ENCODE measurements at regions of chr10 and their contacts with region 1.

Region 1: DNA sequence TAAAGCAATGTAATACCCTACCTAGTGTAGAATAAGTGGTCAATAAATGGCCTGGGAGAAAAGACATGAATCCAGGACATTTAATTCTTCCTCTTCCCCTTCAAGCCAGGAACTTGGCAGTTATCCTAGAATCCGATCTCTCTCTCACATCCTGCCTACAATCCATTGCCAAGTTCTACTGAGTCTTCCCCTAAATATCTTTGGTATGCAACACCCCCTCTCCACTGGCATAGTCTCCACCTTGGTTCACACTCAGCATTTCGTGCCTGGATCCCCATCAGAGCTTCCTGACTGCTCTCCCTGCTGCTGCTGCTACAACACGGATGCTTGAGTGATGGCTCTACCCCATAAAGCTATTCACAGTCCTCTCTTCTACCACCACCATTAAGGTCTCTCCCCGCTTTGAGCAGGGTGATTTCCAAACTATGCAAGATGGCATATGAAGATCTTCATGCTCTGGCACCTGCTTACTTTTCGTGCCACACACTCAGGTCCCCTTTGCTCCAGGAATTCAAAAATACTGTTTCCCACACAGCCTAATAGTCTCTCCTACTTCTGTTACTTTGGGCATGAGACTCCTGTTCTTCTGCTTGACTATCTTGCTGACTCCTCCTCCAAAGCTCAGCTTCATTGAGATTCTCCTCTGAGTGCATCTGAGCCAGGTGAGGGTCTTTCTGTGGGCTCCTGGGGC is 4.8 kb downstream of the ANK3 start:
- DNase-seq: peak; percentile 77 to 95
- H3K4me3 ChIP-seq: no peak overlapping the region
- H3K27ac ChIP-seq: peak overlapping the region; percentile 55
- H3K4me1 ChIP-seq: peaks cover 41% of the 10 kb centered on the region
- H3K27me3 ChIP-seq: no peaks in the 10 kb centered on the region
- CTCF ChIP-seq: no peak

Region 2: GRCh38 chr10:60282771-60283353 is 102.0 kb before region 1 on chr10:
- CTCF ChIA-PET with region 1: no interaction called
- POLR2A ChIA-PET with region 1: no interaction called
- intact Hi-C with region 1: loop called (anchors 2 kb)
- DNase-seq: peak; percentile 32 to 96
- H3K4me3 ChIP-seq: no peak overlapping the region
- H3K27ac ChIP-seq: peak overlapping the region; percentile 52
- H3K4me1 ChIP-seq: peaks cover 24% of the 10 kb centered on the region
- H3K27me3 ChIP-seq: no peaks in the 10 kb centered on the region
- CTCF ChIP-seq: no peak

Region 3: DNA sequence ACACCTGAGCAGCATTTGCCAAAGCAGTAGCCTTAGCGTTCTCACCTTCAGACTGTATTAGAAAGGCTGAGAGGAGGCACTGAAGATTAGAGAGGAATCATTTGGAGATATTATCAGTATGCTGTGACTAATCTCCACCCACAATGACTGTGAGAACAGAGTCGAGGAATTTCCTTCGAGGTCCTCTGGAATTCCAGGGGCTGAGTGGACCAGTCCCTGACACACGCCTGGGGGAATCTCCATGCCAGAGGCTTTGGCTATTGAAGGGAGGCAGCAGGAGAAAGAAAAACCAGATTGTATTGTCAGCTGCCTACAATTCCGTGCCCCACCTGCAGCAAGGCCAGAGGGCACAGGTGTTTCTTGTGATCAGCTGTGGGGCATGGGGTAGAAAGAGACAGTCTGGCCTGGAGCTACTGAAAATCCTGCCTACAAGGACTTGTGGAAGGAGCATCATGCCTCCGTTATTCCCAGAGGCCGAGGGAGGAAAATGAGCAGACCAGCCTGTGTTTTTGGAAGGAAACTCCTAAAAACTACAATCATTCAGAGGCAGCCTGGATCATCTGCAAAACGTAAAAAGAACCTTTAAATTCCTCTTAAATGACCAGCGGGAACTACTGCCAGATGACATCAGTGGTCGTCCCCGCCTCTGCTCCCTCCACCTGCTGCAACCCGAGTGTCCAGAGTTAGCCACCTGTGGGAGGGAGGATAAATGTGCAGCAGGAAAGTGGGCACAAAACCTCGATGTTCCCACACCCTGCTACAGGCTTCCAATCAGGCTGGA is 30.1 kb after region 1 on chr10:
- CTCF ChIA-PET with region 1: no interaction called
- POLR2A ChIA-PET with region 1: no interaction called
- intact Hi-C with region 1: loop called (anchors 1 kb)
- DNase-seq: peak; percentile 90 to 99
- H3K4me3 ChIP-seq: no peak overlapping the region; the same call in 1 of the 2 replicates
- H3K27ac ChIP-seq: peak overlapping the region; percentile 61
- H3K4me1 ChIP-seq: peaks cover 62% of the 10 kb centered on the region
- H3K27me3 ChIP-seq: no peaks in the 10 kb centered on the region
- CTCF ChIP-seq: no peak

Region 4: GRCh38 chr10:60423920-60424319 is 39.1 kb after region 1 on chr10:
- CTCF ChIA-PET with region 1: no interaction called
- POLR2A ChIA-PET with region 1: no interaction called
- intact Hi-C with region 1: loop called (anchors 2 kb)
- DNase-seq: no peak
- H3K4me3 ChIP-seq: no peak overlapping the region
- H3K27ac ChIP-seq: peak overlapping the region; percentile 4; the same call in 1 of the 2 replicates
- H3K4me1 ChIP-seq: peaks cover 38% of the 10 kb centered on the region
- H3K27me3 ChIP-seq: no peaks in the 10 kb centered on the region
- CTCF ChIP-seq: no peak

Measured in PC-9 (cell line).